ENCODE measurements at regions of chr11 and their contacts with region 1.

Region 1: DNA sequence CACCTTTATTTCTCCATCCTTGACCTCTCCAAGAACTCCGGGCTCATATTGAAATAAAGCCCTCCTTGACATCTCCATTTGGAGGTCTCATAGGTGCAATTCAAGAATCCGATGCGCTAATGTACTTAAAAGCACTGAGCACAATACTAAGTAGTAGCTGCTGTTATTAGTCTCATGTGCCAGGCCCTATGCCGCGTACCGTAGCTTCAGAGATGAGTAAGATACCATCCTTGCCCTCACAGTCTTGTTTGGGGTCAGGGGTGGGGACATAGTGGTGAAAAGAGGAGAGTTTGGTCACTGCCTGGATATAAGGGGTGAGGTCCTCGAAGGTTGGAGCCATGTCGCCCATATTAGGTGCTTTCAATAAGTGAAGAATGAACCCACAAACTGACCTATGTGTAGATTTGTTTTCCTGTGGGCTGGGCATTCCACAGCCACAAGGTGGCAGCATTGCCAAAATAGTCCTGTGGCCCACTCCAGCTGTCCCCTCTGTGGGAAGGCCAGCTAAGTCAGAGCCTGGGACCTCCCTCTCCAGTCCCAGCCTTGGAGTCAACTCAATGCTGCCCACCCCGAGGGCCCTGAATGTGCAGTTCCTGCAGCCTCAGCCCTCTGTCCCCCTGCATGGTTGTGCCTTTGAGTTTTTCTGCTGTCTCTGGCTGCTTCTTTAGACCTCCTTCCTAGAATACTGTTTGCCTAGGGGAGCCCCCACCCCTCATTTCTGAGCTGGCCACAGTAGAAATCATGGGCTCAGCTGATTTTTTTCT is 6.5 kb downstream of the DCPS start:
- DNase-seq: peak; percentile 74
- ATAC-seq: peak; percentile 98
- H3K4me3 ChIP-seq: no peak overlapping the region
- H3K27ac ChIP-seq: no peak overlapping the region
- H3K4me1 ChIP-seq: peaks cover 2% of the 10 kb centered on the region; the same call in 1 of the 2 replicates
- H3K27me3 ChIP-seq: no peaks in the 10 kb centered on the region
- CTCF ChIP-seq: peak; percentile 94
- POLR2A ChIP-seq: peak; percentile 51; the same call in 1 of the 2 replicates
- RAD21 ChIP-seq: peak; percentile 99

Region 2: GRCh38 chr11:126383339-126384318 is 73.2 kb after region 1 on chr11:
- CTCF ChIA-PET with region 1: no interaction called
- POLR2A ChIA-PET with region 1: no interaction called
- dilution Hi-C with region 1: no loop called
- in situ Hi-C with region 1: no loop called
- intact Hi-C with region 1: no loop called
- DNase-seq: no peak
- ATAC-seq: no peak
- H3K4me3 ChIP-seq: no peak overlapping the region
- H3K27ac ChIP-seq: no peak overlapping the region
- H3K4me1 ChIP-seq: no peaks in the 10 kb centered on the region
- H3K27me3 ChIP-seq: no peaks in the 10 kb centered on the region
- CTCF ChIP-seq: no peak
- POLR2A ChIP-seq: no peak
- RAD21 ChIP-seq: no peak

Region 3: DNA sequence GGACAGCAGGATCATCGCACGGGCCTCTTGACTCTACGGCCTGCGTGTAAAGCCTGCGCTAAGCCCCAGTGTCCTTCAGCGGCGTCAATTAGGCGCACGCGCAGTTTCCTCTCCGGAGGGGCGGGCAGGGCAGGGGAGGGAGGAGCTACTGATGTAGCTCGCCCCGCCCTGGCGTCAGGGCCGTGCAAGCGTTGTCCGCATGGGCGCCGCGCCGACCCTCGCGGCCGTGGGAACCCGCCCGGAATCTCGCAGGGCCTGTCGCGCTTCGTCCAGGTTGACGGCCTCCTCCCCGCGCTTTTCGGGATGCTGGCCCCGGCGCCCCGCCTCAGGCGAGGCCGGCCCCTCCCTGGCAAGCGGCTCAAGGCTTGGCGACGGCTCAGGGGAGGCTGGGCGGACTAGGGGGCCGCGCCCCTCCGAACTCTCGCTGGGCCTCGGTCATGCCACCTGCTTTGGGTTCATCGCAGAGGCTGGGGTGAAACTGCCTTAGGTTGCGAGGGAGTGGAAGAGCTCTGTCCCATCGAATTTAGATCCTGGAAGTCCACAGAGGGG is 106.2 kb after region 1 on chr11:
- CTCF ChIA-PET with region 1: interaction called, 7 read pairs
- POLR2A ChIA-PET with region 1: no interaction called
- dilution Hi-C with region 1: no loop called
- in situ Hi-C with region 1: loop called (anchors 10 kb)
- intact Hi-C with region 1: no loop called
- DNase-seq: peak; percentile 68
- ATAC-seq: peak; percentile 89
- H3K4me3 ChIP-seq: peak overlapping the region; percentile 42
- H3K27ac ChIP-seq: peak overlapping the region; percentile 64
- H3K4me1 ChIP-seq: peaks cover 29% of the 10 kb centered on the region
- H3K27me3 ChIP-seq: no peaks in the 10 kb centered on the region
- CTCF ChIP-seq: no peak
- POLR2A ChIP-seq: no peak
- RAD21 ChIP-seq: no peak

Region 4: GRCh38 chr11:126440792-126441514 is 130.5 kb after region 1 on chr11:
- CTCF ChIA-PET with region 1: no interaction called
- POLR2A ChIA-PET with region 1: no interaction called
- dilution Hi-C with region 1: no loop called
- in situ Hi-C with region 1: no loop called
- intact Hi-C with region 1: loop called (anchors 1 kb)
- DNase-seq: peak; percentile 59
- ATAC-seq: peak; percentile 96
- H3K4me3 ChIP-seq: no peak overlapping the region
- H3K27ac ChIP-seq: no peak overlapping the region
- H3K4me1 ChIP-seq: no peaks in the 10 kb centered on the region
- H3K27me3 ChIP-seq: no peaks in the 10 kb centered on the region; the same call in 1 of the 2 replicates
- CTCF ChIP-seq: peak; percentile 96
- POLR2A ChIP-seq: no peak
- RAD21 ChIP-seq: peak; percentile 97

Region 5: DNA sequence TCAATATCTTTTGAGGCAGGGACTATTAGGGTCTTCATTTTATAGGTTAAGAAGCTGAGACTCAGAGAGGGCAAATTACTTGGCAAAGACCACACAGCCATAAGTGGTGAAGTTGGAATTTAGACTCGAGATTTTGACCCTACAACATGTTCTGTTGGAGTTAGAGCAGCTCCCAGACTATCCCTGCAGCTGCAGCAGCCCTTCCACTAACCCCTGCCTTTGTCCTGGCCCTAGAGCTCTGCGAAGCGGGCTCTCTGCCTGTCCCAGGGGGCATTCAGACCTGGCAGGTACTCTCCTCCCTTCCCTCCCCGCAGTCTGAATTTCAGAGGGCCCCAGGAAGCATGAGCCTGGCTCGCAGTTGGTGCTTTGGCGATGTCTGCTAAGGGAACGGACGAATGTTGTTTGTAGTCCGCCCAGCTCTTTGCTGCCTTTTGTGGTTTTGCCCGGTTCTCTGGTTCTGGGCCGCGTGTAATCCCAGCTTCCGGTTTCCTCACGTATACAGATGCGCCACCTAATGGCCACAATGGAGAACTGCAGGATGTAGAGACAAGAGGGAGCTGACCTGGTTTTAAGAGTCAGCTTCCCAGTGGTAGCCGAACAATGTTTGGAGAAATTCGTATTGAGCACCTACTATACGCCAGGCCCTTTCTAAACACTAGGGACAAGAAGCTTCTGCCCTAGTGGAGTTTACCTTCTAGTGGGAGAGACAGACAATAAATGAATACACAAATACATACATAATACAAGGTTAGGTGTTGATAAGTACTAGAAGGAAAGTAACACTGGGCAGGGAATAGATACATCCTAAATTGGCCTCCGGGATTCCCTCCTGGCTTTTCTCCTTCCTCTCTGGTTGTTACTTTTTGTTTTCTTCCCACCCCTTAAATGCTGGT is 170.2 kb after region 1 on chr11:
- CTCF ChIA-PET with region 1: interaction called, 35 read pairs
- POLR2A ChIA-PET with region 1: no interaction called
- dilution Hi-C with region 1: no loop called
- in situ Hi-C with region 1: no loop called
- intact Hi-C with region 1: loop called (anchors 1 kb)
- DNase-seq: peak; percentile 88
- ATAC-seq: peak; percentile 87
- H3K4me3 ChIP-seq: no peak overlapping the region
- H3K27ac ChIP-seq: peak overlapping the region; percentile 53
- H3K4me1 ChIP-seq: peaks cover 19% of the 10 kb centered on the region
- H3K27me3 ChIP-seq: no peaks in the 10 kb centered on the region
- CTCF ChIP-seq: peak; percentile 92
- POLR2A ChIP-seq: no peak
- RAD21 ChIP-seq: peak; percentile 71

Region 6: DNA sequence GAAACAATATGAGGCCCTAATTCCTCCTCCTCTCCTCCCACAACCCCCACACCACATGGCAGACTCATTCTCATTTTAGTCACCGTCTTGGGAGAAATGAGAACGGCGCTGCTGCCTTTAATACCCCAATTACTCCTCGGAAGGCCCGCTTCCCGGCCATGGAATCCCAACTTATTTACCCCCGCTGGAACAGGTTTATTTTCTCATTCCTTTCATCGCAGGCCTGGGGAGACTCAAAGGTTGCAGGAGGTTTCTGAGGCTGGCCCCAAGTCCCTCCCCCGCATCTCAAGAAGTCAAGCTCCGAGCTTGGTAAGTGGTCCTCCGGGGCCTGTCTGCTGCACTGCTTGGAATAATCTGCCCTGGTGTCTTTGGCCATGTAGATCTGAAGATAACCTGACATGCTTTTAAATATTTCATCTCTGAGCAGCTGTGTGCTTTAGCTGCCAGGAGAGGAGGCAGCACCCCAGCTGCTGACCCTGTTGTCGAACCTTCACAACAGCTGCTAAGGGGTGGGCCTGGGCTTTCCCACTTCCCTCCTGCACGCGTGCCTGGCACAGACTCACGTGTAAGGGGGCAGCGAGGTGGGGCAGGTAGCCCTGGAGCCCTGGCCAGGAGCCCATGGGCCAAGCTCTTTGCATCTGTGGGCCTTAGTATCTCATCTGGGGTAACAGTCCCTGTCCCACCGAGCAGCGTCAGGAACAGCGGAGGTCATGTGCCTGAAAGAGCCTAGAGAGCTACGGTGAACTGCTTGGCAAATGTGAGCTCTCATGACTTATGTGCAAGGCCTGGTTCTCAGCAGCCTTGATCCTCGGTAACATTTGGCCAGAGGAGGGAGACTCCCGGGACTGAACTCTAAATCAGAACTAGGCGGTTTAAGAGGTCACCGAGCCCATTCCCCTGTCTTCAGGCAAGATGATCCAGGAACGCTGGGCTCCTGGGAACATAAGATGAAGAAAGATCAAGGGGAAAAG is 209.6 kb after region 1 on chr11:
- CTCF ChIA-PET with region 1: no interaction called
- POLR2A ChIA-PET with region 1: no interaction called
- dilution Hi-C with region 1: no loop called
- in situ Hi-C with region 1: no loop called
- intact Hi-C with region 1: no loop called
- DNase-seq: no peak
- ATAC-seq: no peak
- H3K4me3 ChIP-seq: no peak overlapping the region
- H3K27ac ChIP-seq: no peak overlapping the region
- H3K4me1 ChIP-seq: no peaks in the 10 kb centered on the region
- H3K27me3 ChIP-seq: no peaks in the 10 kb centered on the region
- CTCF ChIP-seq: no peak
- POLR2A ChIP-seq: no peak
- RAD21 ChIP-seq: no peak

Region 7: GRCh38 chr11:126898802-126899201 is 588.4 kb after region 1 on chr11:
- CTCF ChIA-PET with region 1: no interaction called
- POLR2A ChIA-PET with region 1: no interaction called
- dilution Hi-C with region 1: no loop called
- in situ Hi-C with region 1: no loop called
- intact Hi-C with region 1: no loop called
- DNase-seq: no peak
- ATAC-seq: no peak
- H3K4me3 ChIP-seq: no peak overlapping the region
- H3K27ac ChIP-seq: no peak overlapping the region
- H3K4me1 ChIP-seq: no peaks in the 10 kb centered on the region
- H3K27me3 ChIP-seq: no peaks in the 10 kb centered on the region
- CTCF ChIP-seq: no peak
- POLR2A ChIP-seq: no peak
- RAD21 ChIP-seq: no peak

Region 8: GRCh38 chr11:127493330-127494022 is 1183.1 kb after region 1 on chr11:
- CTCF ChIA-PET with region 1: no interaction called
- POLR2A ChIA-PET with region 1: no interaction called
- dilution Hi-C with region 1: no loop called
- in situ Hi-C with region 1: no loop called
- intact Hi-C with region 1: loop called (anchors 10 kb)
- DNase-seq: peak; percentile 19
- ATAC-seq: no peak
- H3K4me3 ChIP-seq: no peak overlapping the region
- H3K27ac ChIP-seq: no peak overlapping the region
- H3K4me1 ChIP-seq: no peaks in the 10 kb centered on the region
- H3K27me3 ChIP-seq: no peaks in the 10 kb centered on the region
- CTCF ChIP-seq: peak; percentile 44
- POLR2A ChIP-seq: no peak
- RAD21 ChIP-seq: 0 out of 2 replicates have a peak, but pooled peaks have one; percentile 9